Activated CD4-positive, alpha-beta T cell treated with anti-CD3 and anti-CD28 coated beads, Interleukin-2, amount 10 ng/mL, durations not matched to agents 24 days and 14 days (primary cell): ENCODE measurements at regions of chr7 and their contacts with region 1.

Region 1: GRCh38 chr7:50397320-50397970 is 52.7 kb downstream of the FIGNL1 start:
- DNase-seq: peak; percentile 87
- H3K4me3 Mint-ChIP-seq: peak overlapping the region; percentile 82
- H3K27ac Mint-ChIP-seq: peak overlapping the region; percentile 97
- H3K4me1 Mint-ChIP-seq: peaks cover 63% of the 10 kb centered on the region
- H3K27me3 Mint-ChIP-seq: no peaks in the 10 kb centered on the region

Region 2: DNA sequence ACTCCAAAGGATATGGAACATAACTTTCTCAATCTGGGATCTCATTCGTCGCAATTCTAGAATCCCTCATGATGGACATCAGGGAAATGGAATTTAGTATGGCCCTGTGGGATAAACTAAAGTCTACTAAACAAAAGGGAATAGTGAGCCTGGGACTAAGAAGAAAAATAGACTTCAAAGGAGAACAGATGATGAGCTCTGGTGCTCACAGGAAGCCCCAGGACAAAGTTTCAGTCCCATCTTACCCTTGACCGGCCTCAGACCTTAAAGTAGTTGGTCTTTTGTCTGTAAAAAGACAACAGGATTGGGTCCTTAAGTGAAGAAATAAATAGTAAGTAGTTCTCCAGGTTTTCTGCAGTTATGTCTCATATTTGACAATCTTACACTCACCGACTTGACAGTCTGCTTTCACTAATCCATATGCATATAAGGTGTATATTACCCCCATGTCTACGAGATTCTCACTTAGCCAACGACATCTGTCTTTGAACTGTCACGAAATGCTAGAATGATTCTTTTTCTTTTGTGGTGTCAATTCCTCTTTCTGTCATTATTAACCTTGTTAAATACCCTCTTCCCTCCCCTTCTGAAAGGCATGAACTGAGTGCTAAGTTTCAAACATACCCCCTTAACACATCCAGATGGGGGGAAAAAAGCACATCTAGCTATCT is 103.8 kb before region 1 on chr7:
- intact Hi-C with region 1: loop called (anchors 1 kb)
- DNase-seq: peak; percentile 45
- H3K4me3 Mint-ChIP-seq: no peak overlapping the region
- H3K27ac Mint-ChIP-seq: no peak overlapping the region
- H3K4me1 Mint-ChIP-seq: peaks cover 25% of the 10 kb centered on the region
- H3K27me3 Mint-ChIP-seq: peaks cover 4% of the 10 kb centered on the region

Region 3: GRCh38 chr7:50349963-50350944 is 47.2 kb before region 1 on chr7:
- intact Hi-C with region 1: loop called (anchors 1 kb)
- DNase-seq: peak; percentile 92
- H3K4me3 Mint-ChIP-seq: peak overlapping the region; percentile 76
- H3K27ac Mint-ChIP-seq: peak overlapping the region; percentile 95
- H3K4me1 Mint-ChIP-seq: peaks cover 95% of the 10 kb centered on the region
- H3K27me3 Mint-ChIP-seq: no peaks in the 10 kb centered on the region

Region 4: GRCh38 chr7:50377356-50377755 is 20.1 kb before region 1 on chr7:
- intact Hi-C with region 1: loop called (anchors 1 kb)
- DNase-seq: no peak
- H3K4me3 Mint-ChIP-seq: no peak overlapping the region
- H3K27ac Mint-ChIP-seq: peak overlapping the region; percentile 85
- H3K4me1 Mint-ChIP-seq: peaks cover 67% of the 10 kb centered on the region
- H3K27me3 Mint-ChIP-seq: no peaks in the 10 kb centered on the region

Region 5: DNA sequence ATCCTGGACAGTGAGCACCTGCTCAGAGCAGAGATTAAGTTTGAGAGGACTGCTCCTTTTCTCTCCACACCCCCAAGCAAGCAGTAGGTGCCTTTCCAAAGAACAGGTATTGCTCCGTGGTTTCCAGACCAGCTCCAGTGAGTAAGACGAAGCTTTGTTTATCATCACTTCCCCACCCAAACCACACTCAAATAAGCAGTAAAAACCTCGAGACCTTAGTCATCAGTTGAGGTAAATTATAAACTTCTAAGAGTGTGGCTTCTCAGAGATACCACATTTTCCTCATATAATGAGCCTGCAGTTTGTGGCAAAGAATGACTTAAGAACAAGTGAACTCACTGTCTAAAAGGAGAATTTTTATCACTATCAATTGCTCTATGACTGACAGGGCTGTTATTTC is 435.3 kb after region 1 on chr7:
- intact Hi-C with region 1: loop called (anchors 5 kb)
- DNase-seq: peak; percentile 80
- H3K4me3 Mint-ChIP-seq: peak overlapping the region; percentile 48
- H3K27ac Mint-ChIP-seq: peak overlapping the region; percentile 64
- H3K4me1 Mint-ChIP-seq: peaks cover 27% of the 10 kb centered on the region
- H3K27me3 Mint-ChIP-seq: peaks cover 44% of the 10 kb centered on the region

Region 6: GRCh38 chr7:51188987-51189386 is 791.5 kb after region 1 on chr7:
- intact Hi-C with region 1: no loop called
- DNase-seq: no peak
- H3K4me3 Mint-ChIP-seq: no peak overlapping the region
- H3K27ac Mint-ChIP-seq: no peak overlapping the region
- H3K4me1 Mint-ChIP-seq: no peaks in the 10 kb centered on the region
- H3K27me3 Mint-ChIP-seq: peaks cover 4% of the 10 kb centered on the region